ENCODE measurements at regions of chr17 and their contacts with region 1.

Region 1: GRCh38 chr17:1716076-1716995 is 6.2 kb upstream of the TLCD2 start:
- DNase-seq: peak; percentile 100
- H3K4me3 ChIP-seq: peak overlapping the region; percentile 97 to 100
- H3K27ac ChIP-seq: peak overlapping the region; percentile 100
- H3K4me1 ChIP-seq: peaks cover 46% of the 10 kb centered on the region
- H3K27me3 ChIP-seq: no peaks in the 10 kb centered on the region
- CTCF ChIP-seq: no peak
- POLR2A ChIP-seq: peak in 1 of 2 donors; percentile 99

Region 2: DNA sequence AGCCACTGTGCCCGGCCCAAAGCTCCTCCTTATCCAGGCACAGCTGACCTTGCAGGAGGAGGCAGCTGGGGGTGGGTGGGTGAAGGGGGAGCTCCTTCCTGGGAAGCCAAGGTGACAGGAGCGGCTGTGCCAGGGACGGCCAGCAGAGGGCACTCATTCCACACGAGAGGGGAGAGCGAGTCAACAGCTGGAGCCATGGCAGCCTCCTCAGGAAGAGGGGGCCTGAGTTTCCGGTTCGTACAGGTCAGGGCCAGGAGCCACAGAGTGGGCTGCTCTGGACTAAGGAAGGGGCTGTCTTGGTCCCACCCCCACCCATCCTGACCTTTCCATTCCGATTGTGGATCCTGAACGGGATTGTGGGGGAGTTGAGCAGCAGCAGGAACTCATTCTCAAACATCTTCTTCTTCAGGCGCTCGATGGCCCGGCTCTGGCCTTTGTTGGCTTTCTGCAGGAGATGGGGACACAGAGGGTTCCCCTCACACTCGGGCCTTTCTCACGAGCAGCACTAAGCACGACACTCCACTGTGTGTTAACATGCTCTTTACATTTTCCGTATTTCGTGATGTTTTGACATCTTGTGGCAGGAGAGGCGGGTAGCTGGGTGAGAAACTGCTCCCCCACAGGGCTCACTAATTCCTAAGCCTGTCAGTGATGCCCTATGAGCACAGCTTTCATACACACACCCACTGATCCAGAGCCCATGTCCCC is 657.8 kb before region 1 on chr17:
- intact Hi-C with region 1: no loop called
- DNase-seq: no peak
- H3K4me3 ChIP-seq: no peak overlapping the region
- H3K27ac ChIP-seq: no peak overlapping the region
- H3K4me1 ChIP-seq: peaks cover 4% of the 10 kb centered on the region
- H3K27me3 ChIP-seq: no peaks in the 10 kb centered on the region
- CTCF ChIP-seq: peak in 1 of 3 experiments; percentile 29
- POLR2A ChIP-seq: no peak

Region 3: DNA sequence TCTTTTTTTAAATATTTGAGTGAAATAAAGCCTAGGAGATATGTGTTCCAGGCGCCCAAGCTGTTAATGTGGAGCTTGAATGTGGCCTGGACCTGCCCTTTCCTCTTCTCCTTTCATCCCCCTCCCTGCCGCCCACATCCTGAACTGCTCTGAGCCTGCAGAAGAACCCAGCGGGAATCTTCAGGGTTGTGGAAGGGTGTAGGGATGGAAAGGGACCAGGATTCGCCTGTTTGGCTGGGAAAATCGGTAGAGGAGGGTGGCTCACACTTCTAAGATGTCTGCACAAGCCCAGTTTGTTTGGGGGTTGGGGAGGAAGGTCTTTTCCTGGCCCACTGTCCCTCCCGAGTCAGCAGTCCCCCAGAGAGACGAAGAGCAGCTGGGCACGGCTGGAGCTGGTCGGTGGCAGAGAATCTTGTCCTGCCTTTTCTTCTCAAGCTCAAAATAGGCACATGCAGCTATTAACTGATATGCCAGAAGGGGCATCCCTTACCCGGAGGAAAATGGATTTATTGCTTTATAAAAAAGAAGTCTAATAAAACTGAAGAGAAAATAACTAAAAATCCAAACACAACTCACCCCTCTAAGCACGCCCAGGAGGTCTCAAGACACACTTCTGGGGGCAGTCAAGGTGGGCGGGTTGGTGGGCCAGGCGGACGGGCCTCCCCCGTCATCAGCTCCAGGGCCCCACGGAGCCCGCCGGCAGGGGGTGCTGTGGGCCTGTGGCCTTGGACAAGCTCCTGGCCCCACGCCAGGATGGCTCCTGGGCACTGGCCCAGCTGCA is 142.2 kb before region 1 on chr17:
- intact Hi-C with region 1: loop called (anchors 10 kb)
- DNase-seq: no peak
- H3K4me3 ChIP-seq: no peak overlapping the region
- H3K27ac ChIP-seq: peak overlapping the region; percentile 80
- H3K4me1 ChIP-seq: peaks cover 28% of the 10 kb centered on the region
- H3K27me3 ChIP-seq: no peaks in the 10 kb centered on the region
- CTCF ChIP-seq: peak; percentile 89 to 97 (median 91)
- POLR2A ChIP-seq: no peak

Region 4: DNA sequence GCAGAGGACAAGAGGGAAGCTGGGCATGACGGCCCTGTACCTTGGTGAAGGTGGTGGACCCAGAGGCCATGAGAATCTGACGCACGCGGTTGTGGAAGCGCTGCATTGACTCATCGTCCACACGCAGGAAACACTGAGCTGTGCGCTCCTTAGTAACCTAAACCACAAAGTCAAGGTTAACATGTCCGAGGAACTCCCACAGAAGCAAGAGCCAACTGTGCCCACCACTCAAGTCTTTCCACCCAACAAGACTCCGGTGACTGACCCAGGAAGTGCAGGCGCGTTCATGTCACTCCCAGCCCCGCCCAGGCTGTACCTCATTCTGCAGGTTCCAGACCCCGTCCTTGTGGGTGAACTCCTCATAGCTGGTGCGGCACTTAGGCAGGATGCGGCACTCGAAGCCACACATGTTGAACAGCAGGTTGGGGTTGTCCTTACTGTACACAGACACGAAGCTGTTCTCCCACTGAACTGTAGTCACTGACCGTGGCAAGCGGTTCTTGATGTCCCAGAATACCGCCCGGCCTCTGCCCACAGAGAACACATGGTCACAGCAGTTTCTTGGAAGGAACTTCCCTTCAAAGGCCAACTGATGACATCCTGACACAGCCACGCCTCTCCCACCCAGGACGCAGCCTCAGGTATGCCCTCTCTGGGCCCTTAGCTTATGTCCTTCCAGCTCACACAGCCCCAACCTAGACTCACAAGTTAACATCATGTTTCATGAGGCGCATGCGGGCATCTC is 43.1 kb before region 1 on chr17:
- intact Hi-C with region 1: loop called (anchors 2 kb)
- DNase-seq: no peak
- H3K4me3 ChIP-seq: no peak overlapping the region
- H3K27ac ChIP-seq: no peak overlapping the region
- H3K4me1 ChIP-seq: peaks cover 11% of the 10 kb centered on the region
- H3K27me3 ChIP-seq: no peaks in the 10 kb centered on the region
- CTCF ChIP-seq: no peak
- POLR2A ChIP-seq: no peak

Region 5: DNA sequence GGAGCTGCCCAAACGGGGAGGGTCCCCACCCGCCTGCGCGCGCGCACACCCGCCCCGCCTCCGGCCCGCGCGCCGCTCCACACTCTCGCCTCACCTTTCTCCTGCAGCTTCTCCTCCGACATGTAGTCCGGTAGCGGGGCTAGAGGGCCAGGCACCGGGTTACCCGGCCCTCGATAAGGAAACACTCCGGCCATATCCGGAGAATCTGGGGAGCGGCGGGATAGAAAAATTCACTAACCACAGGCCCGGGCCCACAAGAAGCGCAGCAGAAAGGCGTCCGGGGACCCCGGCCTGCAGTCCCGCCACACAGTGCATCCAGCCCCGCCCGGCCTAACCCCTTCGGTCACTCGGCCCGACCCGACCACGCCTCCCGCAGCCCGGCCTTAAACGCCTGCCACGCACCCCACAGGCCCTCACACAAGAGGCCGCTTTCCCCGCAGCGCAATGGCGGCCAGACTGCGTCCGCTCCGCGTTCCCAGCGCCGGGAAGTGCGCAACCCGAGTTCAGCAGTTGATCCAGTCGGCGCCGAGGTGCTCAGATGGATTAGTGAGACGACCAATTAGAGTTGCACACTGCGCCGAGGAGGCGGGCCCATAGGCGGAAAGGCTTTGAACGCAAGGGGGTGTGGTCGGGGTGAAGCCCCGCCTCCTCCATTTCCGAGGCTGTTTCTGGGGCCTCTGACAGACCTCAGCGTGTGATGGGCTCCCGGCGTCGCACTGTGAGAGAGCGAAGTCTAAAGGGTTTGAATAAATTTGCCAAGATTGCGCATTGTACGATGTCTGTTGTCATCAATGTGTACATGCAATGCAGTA is 31.8 kb before region 1 on chr17 and contains the start of gene PRPF8:
- intact Hi-C with region 1: loop called (anchors 2 kb)
- DNase-seq: peak; percentile 96 to 98
- H3K4me3 ChIP-seq: peak within 1 kb of the TSS; percentile 57 to 96
- H3K27ac ChIP-seq: peak within 1 kb of the TSS; percentile 86
- H3K4me1 ChIP-seq: peaks cover 29% of the 10 kb centered on the region
- H3K27me3 ChIP-seq: no peaks in the 10 kb centered on the region
- CTCF ChIP-seq: no peak
- POLR2A ChIP-seq: peak; percentile 50 to 97
- total RNA-seq, gene PRPF8: 247 TPM

Region 6: DNA sequence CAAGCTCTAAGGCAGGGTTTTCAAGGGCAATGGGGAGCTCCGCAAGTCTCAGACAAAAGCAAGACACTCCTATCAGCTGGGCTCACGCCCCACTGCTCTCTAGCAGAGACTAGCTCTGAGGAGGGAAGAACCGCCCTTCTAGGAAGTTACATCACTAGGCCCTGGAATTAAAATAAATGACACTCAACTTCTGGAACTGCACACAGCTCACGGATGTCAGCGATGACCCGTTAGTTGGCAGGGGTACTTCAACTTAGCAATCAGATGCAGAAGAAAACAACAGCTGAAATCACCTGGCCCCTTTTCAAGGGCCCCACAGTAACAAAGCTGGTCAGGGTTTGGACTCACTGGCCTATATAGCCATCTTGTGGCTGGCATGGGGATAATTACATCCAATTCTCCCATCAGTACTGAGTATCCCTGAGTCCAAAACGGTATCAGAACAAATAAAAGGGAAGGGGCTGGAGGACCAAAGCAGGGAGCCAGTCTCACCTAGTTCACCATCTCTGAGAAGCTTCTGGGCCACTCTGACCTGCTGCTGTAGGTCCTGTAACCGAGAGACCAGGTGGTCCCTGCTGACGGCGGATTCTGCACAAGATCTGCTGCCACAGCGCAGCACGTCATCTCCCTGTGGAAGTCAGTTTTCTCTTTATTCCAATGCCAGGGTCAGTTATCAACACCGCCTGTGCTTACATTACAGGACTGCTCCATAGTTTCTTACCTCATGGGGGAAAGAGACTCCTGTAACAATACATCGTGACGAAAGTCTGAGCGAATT is 67.7 kb after region 1 on chr17:
- intact Hi-C with region 1: loop called (anchors 2 kb)
- DNase-seq: peak in 1 of 2 donors; percentile 99
- H3K4me3 ChIP-seq: no peak overlapping the region
- H3K27ac ChIP-seq: peak overlapping the region; percentile 97
- H3K4me1 ChIP-seq: peaks cover 76% of the 10 kb centered on the region
- H3K27me3 ChIP-seq: no peaks in the 10 kb centered on the region
- CTCF ChIP-seq: peak; percentile 58 to 93 (median 78)
- POLR2A ChIP-seq: peak in 1 of 2 donors; percentile 63

Region 7: GRCh38 chr17:1800240-1800639 is 83.9 kb after region 1 on chr17:
- intact Hi-C with region 1: no loop called
- DNase-seq: no peak
- H3K4me3 ChIP-seq: no peak overlapping the region
- H3K27ac ChIP-seq: no peak overlapping the region
- H3K4me1 ChIP-seq: no peaks in the 10 kb centered on the region
- H3K27me3 ChIP-seq: no peaks in the 10 kb centered on the region
- CTCF ChIP-seq: no peak
- POLR2A ChIP-seq: no peak